ENCODE measurements at regions of chr6 and their contacts with region 1.

Region 1: DNA sequence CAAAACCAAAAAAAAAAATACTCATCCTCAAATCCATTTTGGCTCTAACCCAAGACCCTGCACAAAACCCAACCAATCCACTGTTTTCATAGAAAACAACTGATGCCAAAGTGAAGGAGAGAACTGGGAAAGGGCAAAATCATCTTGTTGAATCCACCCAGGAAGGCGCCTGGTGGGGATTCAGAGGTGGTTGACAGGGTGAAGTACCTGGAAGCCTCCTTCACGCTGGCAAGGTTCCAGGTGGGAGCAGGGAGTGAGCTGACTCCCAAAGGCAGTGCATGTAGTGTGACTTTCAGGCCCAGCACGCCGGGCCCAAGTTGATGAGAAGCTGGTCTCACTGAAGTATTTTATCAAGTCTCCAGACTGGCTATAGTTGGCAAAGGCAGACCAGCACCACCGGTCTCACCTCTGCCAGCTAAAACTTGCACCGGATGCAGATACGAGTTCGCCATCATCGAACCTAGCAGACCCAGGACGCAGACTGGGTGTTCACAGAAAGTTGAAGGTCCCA is 16.5 kb downstream of the PPP1R10 start:
- DNase-seq: no peak
- ATAC-seq: no peak
- H3K4me3 Mint-ChIP-seq: no peak overlapping the region
- H3K27ac Mint-ChIP-seq: no peak overlapping the region
- H3K4me1 Mint-ChIP-seq: peaks cover 18% of the 10 kb centered on the region
- H3K27me3 Mint-ChIP-seq: no peaks in the 10 kb centered on the region

Region 2: GRCh38 chr6:30481211-30481964 is 119.1 kb before region 1 on chr6:
- POLR2A ChIA-PET with region 1: interaction called, 13 read pairs
- DNase-seq: peak; percentile 49
- ATAC-seq: no peak
- H3K4me3 Mint-ChIP-seq: peak overlapping the region; percentile 34
- H3K27ac Mint-ChIP-seq: no peak overlapping the region
- H3K4me1 Mint-ChIP-seq: peaks cover 18% of the 10 kb centered on the region
- H3K27me3 Mint-ChIP-seq: peaks cover 71% of the 10 kb centered on the region

Region 3: GRCh38 chr6:30541515-30542403 is 58.7 kb before region 1 on chr6:
- POLR2A ChIA-PET with region 1: interaction called, 11 read pairs
- DNase-seq: peak; percentile 82
- ATAC-seq: peak; percentile 71
- H3K4me3 Mint-ChIP-seq: peak overlapping the region; percentile 74
- H3K27ac Mint-ChIP-seq: peak overlapping the region; percentile 71
- H3K4me1 Mint-ChIP-seq: peaks cover 28% of the 10 kb centered on the region
- H3K27me3 Mint-ChIP-seq: no peaks in the 10 kb centered on the region

Region 4: GRCh38 chr6:30578051-30578450 is 22.5 kb before region 1 on chr6:
- POLR2A ChIA-PET with region 1: no interaction called
- DNase-seq: no peak
- ATAC-seq: no peak
- H3K4me3 Mint-ChIP-seq: no peak overlapping the region
- H3K27ac Mint-ChIP-seq: no peak overlapping the region
- H3K4me1 Mint-ChIP-seq: peaks cover 22% of the 10 kb centered on the region
- H3K27me3 Mint-ChIP-seq: no peaks in the 10 kb centered on the region

Region 5: GRCh38 chr6:30611150-30611855 is 10.8 kb after region 1 on chr6:
- POLR2A ChIA-PET with region 1: interaction called, 69 read pairs
- DNase-seq: no peak
- ATAC-seq: no peak
- H3K4me3 Mint-ChIP-seq: no peak overlapping the region
- H3K27ac Mint-ChIP-seq: peak overlapping the region; percentile 40
- H3K4me1 Mint-ChIP-seq: peaks cover 53% of the 10 kb centered on the region
- H3K27me3 Mint-ChIP-seq: no peaks in the 10 kb centered on the region

Region 6: DNA sequence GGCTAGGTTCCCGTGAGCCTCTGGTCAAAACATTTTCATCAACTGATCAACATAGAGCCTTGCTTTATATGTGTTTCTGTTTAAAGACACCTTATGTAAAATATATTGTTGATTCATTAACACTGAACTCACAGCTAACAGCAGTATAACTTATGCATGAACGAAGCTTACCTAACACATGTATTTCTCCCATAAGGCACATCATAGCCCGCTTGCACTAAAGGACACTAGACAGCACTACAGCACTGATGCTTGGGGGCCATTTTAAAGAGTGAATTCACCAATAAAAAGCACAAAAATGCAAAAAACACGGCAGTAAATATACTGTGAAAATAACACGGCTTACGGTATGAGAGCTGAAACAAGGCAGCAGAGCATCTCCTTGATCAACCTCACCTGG is 138.0 kb after region 1 on chr6:
- POLR2A ChIA-PET with region 1: no interaction called
- DNase-seq: no peak
- ATAC-seq: no peak
- H3K4me3 Mint-ChIP-seq: peak overlapping the region; percentile 88
- H3K27ac Mint-ChIP-seq: peak overlapping the region; percentile 56
- H3K4me1 Mint-ChIP-seq: peaks cover 60% of the 10 kb centered on the region
- H3K27me3 Mint-ChIP-seq: no peaks in the 10 kb centered on the region